CD8-positive, alpha-beta T cell (primary cell): ENCODE measurements at regions of chr9 and their contacts with region 1.

Region 1: GRCh38 chr9:92986176-92987085 is 39.1 kb downstream of the FGD3 start:
- DNase-seq: peak in 7 of 9 experiments; percentile 22 to 80 (median 67)
- ATAC-seq: peak; percentile 76
- H3K4me3 ChIP-seq: no peak overlapping the region
- H3K4me3 Mint-ChIP-seq: peak overlapping the region; percentile 6
- H3K27ac ChIP-seq: peak overlapping the region; percentile 14 to 59
- H3K27ac Mint-ChIP-seq: peak overlapping the region; percentile 86
- H3K4me1 ChIP-seq: peaks cover 73% of the 10 kb centered on the region
- H3K4me1 Mint-ChIP-seq: peaks cover 83% of the 10 kb centered on the region
- H3K27me3 ChIP-seq: no peaks in the 10 kb centered on the region
- H3K27me3 Mint-ChIP-seq: no peaks in the 10 kb centered on the region
- CTCF ChIP-seq: peak; percentile 73

Region 2: DNA sequence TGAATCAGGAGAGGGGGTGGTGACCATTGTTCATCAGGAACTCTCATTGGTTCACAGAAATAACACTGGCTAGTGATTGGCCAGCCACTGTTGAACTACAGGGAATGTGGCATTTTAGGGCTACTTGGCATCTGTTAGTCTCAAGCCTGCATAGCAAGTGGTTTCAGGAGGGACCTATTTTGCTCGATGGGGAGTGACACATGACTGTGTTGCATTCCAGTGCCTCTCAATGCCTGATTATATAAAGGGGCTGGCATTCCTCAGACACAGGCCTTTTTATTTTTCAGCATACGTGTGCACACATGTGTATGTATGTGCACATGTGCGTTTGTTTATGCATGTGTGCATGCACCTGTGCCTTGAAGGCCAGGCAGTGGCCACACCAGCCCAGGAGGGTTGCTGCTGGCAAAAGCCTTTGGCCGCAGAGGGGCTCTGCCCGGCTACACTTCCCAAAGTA is 15.9 kb before region 1 on chr9:
- CTCF ChIA-PET with region 1: interaction called, 11 read pairs
- POLR2A ChIA-PET with region 1: interaction called, 7 read pairs
- intact Hi-C with region 1: loop called in 1 of 2 experiments (anchors 2 kb)
- DNase-seq: peak in 3 of 9 experiments; percentile 12 to 50 (median 39)
- ATAC-seq: no peak
- H3K4me3 ChIP-seq: peak overlapping the region in 1 of 2 experiments; percentile 59
- H3K4me3 Mint-ChIP-seq: peak overlapping the region; percentile 91
- H3K27ac ChIP-seq: peak overlapping the region; percentile 91 to 94
- H3K27ac Mint-ChIP-seq: peak overlapping the region; percentile 100
- H3K4me1 ChIP-seq: peaks cover 78% of the 10 kb centered on the region
- H3K4me1 Mint-ChIP-seq: peaks cover 80% of the 10 kb centered on the region
- H3K27me3 ChIP-seq: no peaks in the 10 kb centered on the region
- H3K27me3 Mint-ChIP-seq: no peaks in the 10 kb centered on the region
- CTCF ChIP-seq: no peak

Region 3: GRCh38 chr9:93302551-93303257 is 316.3 kb after region 1 on chr9:
- CTCF ChIA-PET with region 1: no interaction called
- POLR2A ChIA-PET with region 1: no interaction called
- intact Hi-C with region 1: loop called in 1 of 2 experiments (anchors 10 kb)
- DNase-seq: peak; percentile 30 to 79 (median 63)
- ATAC-seq: peak; percentile 92
- H3K4me3 ChIP-seq: no peak overlapping the region
- H3K4me3 Mint-ChIP-seq: no peak overlapping the region
- H3K27ac ChIP-seq: no peak overlapping the region
- H3K27ac Mint-ChIP-seq: no peak overlapping the region
- H3K4me1 ChIP-seq: no peaks in the 10 kb centered on the region
- H3K4me1 Mint-ChIP-seq: no peaks in the 10 kb centered on the region
- H3K27me3 ChIP-seq: no peaks in the 10 kb centered on the region
- H3K27me3 Mint-ChIP-seq: no peaks in the 10 kb centered on the region
- CTCF ChIP-seq: peak; percentile 49